ENCODE measurements at regions of chr2 and their contacts with region 1.

Region 1: DNA sequence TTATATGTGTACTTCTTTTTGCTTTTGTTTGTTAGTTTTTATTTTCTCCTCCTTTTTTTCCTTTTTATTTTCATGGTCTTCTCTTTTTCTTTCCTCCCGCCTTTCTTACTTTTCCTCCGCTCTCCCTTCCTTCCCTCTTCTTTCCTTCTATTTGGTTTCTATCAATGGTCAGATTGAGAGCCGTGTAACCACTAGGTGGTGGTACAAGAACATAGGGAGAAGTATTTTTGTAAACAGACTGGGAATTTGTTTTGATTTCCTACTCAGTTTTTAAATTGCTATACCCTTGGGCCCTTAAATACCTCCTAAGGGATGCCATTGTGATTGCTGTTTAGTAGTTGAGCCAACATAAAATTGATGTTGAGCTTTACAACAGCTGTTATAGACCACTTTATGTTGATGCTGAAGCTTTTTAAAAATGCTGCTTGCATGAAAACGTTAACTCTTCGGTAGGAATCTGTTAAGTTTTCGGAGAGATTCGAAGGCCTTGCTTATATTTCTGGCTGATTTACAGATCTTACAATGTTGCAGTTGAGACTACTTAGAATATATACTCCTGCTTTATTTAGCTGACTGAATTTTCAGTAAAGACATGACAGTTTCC is 124.2 kb downstream of the UBE2E3 start:
- DNase-seq: no peak
- H3K4me3 Mint-ChIP-seq: no peak overlapping the region
- H3K27ac Mint-ChIP-seq: no peak overlapping the region
- H3K4me1 Mint-ChIP-seq: peaks cover 46% of the 10 kb centered on the region
- H3K27me3 Mint-ChIP-seq: peaks cover 6% of the 10 kb centered on the region

Region 2: DNA sequence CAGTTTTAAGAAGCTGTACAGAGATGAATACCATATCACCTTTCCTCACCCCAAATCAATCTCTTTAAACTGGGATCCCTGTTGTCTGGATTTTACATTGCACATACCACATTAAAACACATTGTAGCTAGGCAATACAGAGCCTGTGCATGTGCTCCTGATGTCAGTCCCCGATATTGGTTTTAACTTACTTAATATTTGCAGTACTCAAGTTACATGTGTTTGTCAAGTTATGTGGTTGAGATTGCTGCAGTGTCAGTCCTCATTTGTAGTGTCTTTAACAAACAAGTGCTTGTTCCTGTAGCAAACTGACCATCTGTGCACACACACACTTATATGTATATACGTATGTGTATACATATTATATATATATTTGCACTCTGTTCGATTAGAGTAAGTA is 134.6 kb before region 1 on chr2:
- CTCF ChIA-PET with region 1: no interaction called
- DNase-seq: no peak
- H3K4me3 Mint-ChIP-seq: no peak overlapping the region
- H3K27ac Mint-ChIP-seq: no peak overlapping the region
- H3K4me1 Mint-ChIP-seq: no peaks in the 10 kb centered on the region
- H3K27me3 Mint-ChIP-seq: peaks cover 9% of the 10 kb centered on the region

Region 3: GRCh38 chr2:181008407-181008806 is 96.2 kb before region 1 on chr2:
- CTCF ChIA-PET with region 1: no interaction called
- DNase-seq: no peak
- H3K4me3 Mint-ChIP-seq: no peak overlapping the region
- H3K27ac Mint-ChIP-seq: no peak overlapping the region
- H3K4me1 Mint-ChIP-seq: no peaks in the 10 kb centered on the region
- H3K27me3 Mint-ChIP-seq: no peaks in the 10 kb centered on the region

Region 4: GRCh38 chr2:181142514-181142913 is 37.9 kb after region 1 on chr2:
- CTCF ChIA-PET with region 1: interaction called, 28 read pairs
- DNase-seq: no peak
- H3K4me3 Mint-ChIP-seq: peak overlapping the region; percentile 67
- H3K27ac Mint-ChIP-seq: peak overlapping the region; percentile 88
- H3K4me1 Mint-ChIP-seq: peaks cover 68% of the 10 kb centered on the region
- H3K27me3 Mint-ChIP-seq: no peaks in the 10 kb centered on the region

Region 5: GRCh38 chr2:181275643-181276070 is 171.0 kb after region 1 on chr2:
- CTCF ChIA-PET with region 1: interaction called, 13 read pairs
- DNase-seq: peak; percentile 37
- H3K4me3 Mint-ChIP-seq: no peak overlapping the region
- H3K27ac Mint-ChIP-seq: peak overlapping the region; percentile 77
- H3K4me1 Mint-ChIP-seq: peaks cover 32% of the 10 kb centered on the region
- H3K27me3 Mint-ChIP-seq: no peaks in the 10 kb centered on the region

Region 6: DNA sequence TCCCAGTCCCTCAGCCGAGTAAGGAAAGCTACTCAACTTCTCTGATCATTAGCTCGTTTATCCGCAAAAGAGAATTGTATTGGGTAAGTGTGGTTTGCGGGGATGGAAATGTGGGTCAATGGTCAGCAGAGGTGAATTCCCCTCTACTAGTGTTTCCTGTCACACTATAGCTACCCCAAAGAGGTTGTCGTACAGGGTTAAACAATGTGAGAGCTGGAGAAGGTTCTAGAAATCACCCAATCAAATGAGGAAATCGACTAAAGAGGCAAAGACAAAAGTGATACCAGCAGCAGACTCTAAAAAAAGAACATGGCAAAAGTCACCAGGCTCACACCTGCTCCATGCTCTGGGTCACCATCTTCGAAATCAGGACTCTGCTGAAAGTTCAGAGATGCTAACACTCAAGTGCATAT is 207.9 kb after region 1 on chr2:
- CTCF ChIA-PET with region 1: interaction called, 12 read pairs
- DNase-seq: peak; percentile 42
- H3K4me3 Mint-ChIP-seq: peak overlapping the region; percentile 68
- H3K27ac Mint-ChIP-seq: peak overlapping the region; percentile 97
- H3K4me1 Mint-ChIP-seq: peaks cover 64% of the 10 kb centered on the region
- H3K27me3 Mint-ChIP-seq: no peaks in the 10 kb centered on the region

Region 7: DNA sequence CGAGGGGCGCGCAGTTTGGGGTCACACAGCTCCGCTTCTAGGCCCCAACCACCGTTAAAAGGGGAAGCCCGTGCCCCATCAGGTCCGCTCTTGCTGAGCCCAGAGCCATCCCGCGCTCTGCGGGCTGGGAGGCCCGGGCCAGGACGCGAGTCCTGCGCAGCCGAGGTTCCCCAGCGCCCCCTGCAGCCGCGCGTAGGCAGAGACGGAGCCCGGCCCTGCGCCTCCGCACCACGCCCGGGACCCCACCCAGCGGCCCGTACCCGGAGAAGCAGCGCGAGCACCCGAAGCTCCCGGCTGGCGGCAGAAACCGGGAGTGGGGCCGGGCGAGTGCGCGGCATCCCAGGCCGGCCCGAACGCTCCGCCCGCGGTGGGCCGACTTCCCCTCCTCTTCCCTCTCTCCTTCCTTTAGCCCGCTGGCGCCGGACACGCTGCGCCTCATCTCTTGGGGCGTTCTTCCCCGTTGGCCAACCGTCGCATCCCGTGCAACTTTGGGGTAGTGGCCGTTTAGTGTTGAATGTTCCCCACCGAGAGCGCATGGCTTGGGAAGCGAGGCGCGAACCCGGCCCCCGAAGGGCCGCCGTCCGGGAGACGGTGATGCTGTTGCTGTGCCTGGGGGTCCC is 352.6 kb after region 1 on chr2 and contains the start of gene ITGA4:
- CTCF ChIA-PET with region 1: interaction called, 105 read pairs
- DNase-seq: peak; percentile 92
- H3K4me3 Mint-ChIP-seq: peak within 1 kb of the TSS; percentile 92
- H3K27ac Mint-ChIP-seq: peak within 1 kb of the TSS; percentile 94
- H3K4me1 Mint-ChIP-seq: peaks cover 43% of the 10 kb centered on the region
- H3K27me3 Mint-ChIP-seq: no peaks in the 10 kb centered on the region

Region 8: DNA sequence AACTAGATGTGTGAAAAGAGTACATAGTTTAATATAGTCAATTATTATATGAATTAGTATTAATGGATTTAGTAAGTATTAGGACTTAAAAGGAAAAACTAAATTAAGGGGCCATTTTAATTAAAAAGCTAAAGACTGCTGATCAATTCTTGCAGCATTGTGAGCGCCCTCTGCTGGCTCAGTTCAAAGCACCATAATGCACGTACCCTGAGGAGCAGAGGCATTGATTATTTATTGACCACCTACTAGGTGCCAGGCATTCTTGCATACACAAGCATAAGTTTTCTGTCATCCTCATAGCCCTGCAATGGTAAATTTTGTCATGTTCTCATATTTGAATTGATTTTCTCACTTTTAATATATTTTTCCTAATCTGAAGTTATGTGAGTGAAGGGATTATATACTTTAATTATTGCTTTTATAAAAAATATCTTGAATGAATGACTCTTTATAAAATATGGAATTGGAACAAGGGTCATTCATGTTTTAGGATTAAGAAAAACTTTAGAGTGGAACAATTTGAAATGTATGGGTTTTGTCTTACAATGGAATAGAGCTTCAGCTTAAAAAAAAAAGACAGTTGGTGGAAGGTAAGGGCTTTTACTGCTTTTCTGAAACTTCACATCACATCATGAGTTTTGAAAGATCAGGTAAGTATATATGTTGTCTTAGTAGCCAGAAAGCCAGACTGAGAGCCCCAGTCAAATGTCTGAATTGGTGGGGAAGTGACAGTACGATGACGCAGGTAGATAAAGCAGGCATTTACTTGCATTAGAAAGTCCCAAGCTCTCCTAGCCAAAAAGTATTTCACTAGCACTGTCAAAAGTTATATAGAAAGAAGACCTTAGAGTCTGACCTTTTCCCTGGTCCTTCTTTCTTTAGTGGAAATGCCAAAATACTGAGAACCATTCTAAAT is 362.3 kb after region 1 on chr2:
- CTCF ChIA-PET with region 1: interaction called, 105 read pairs
- DNase-seq: peak; percentile 85
- H3K4me3 Mint-ChIP-seq: peak overlapping the region; percentile 21
- H3K27ac Mint-ChIP-seq: peak overlapping the region; percentile 40
- H3K4me1 Mint-ChIP-seq: peaks cover 92% of the 10 kb centered on the region
- H3K27me3 Mint-ChIP-seq: no peaks in the 10 kb centered on the region

Region 9: DNA sequence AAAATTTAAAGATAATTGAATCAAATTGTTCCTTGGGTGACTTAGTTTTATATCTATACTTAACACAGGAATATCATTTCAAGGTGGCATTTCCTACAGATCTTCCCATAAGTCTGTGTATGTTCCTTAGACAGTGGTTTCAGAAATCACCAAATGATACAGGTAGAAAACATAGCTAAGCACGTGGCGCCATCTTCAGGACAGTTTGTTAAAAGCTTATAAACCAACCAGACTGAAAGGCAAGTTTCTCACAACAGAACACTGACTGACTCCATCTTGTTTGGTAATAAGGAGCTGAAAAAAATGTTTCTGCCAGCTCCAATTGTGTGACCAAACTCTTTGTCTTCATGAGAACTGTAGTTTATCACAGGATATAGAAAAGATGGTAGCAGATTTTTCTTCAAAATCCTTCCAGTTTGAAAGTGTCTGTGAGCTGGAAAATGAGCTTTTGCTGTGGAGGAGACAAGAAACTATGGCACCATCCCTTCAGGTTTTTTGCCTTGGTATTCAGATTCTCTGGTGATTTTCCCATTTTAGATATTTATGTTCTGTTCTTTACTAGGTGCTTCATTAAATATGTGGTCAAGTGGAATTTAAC is 610.5 kb after region 1 on chr2:
- CTCF ChIA-PET with region 1: interaction called, 28 read pairs
- DNase-seq: peak; percentile 82
- H3K4me3 Mint-ChIP-seq: no peak overlapping the region
- H3K27ac Mint-ChIP-seq: no peak overlapping the region
- H3K4me1 Mint-ChIP-seq: no peaks in the 10 kb centered on the region
- H3K27me3 Mint-ChIP-seq: peaks cover 4% of the 10 kb centered on the region

Measured in activated naive CD4-positive, alpha-beta T cell treated with anti-CD3 and anti-CD28 coated beads, Interleukin-2, amount 10 ng/mL, durations not matched to agents 7 days and 5 days (primary cell).